ENCODE measurements at regions of chr16 and their contacts with region 1.

Region 1: GRCh38 chr16:72664509-72665225 is 383.3 kb downstream of the ZFHX3 start:
- DNase-seq: peak; percentile 91 to 94
- H3K4me3 ChIP-seq: peak overlapping the region; percentile 90 to 93 (median 93)
- H3K27ac ChIP-seq: peak overlapping the region; percentile 40 to 68
- H3K4me1 ChIP-seq: no peaks in the 10 kb centered on the region
- H3K27me3 ChIP-seq: no peaks in the 10 kb centered on the region
- CTCF ChIP-seq: no peak
- POLR2A ChIP-seq: no peak

Region 2: DNA sequence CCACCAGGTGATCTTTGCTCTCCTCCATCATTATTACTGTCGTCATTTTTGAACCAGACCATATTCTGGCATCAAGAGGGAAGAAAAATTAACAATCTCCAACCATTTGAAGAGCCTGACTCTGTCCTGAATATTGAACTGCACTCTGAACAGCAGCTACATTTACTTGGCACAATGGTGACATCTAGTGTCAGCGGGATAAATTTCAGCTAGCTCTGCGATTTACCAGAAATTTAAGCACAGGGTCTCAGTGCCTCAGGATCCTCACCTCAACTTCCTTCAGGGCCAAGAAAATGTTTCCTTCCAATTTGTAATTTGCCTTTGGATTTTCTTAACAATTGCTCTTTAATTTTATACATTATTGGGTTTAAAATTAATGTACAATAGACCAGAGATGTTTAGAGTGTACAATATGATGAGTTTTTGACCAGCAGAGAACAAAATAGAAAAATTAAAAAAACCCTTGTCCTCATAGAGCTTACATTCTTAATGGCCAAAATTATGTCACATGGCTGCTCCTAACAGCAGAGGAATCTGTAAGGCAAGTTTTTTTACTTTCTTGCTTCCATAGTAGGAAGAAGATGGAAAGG is 1164.8 kb before region 1 on chr16:
- intact Hi-C with region 1: loop called (anchors 10 kb)
- DNase-seq: no peak
- H3K4me3 ChIP-seq: no peak overlapping the region
- H3K27ac ChIP-seq: no peak overlapping the region
- H3K4me1 ChIP-seq: no peaks in the 10 kb centered on the region
- H3K27me3 ChIP-seq: no peaks in the 10 kb centered on the region
- CTCF ChIP-seq: peak; percentile 49 to 65 (median 55)
- POLR2A ChIP-seq: no peak

Region 3: GRCh38 chr16:72552654-72553053 is 112.0 kb before region 1 on chr16:
- intact Hi-C with region 1: no loop called
- DNase-seq: no peak
- H3K4me3 ChIP-seq: no peak overlapping the region
- H3K27ac ChIP-seq: no peak overlapping the region
- H3K4me1 ChIP-seq: no peaks in the 10 kb centered on the region
- H3K27me3 ChIP-seq: no peaks in the 10 kb centered on the region
- CTCF ChIP-seq: no peak
- POLR2A ChIP-seq: no peak

Region 4: GRCh38 chr16:73036074-73036826 is 371.6 kb after region 1 on chr16:
- intact Hi-C with region 1: no loop called
- DNase-seq: no peak
- H3K4me3 ChIP-seq: peak overlapping the region in 2 of 3 donors; percentile 29 to 36
- H3K27ac ChIP-seq: no peak overlapping the region
- H3K4me1 ChIP-seq: peaks cover 0 to 7% of the 10 kb centered on the region in 2 donors
- H3K27me3 ChIP-seq: no peaks in the 10 kb centered on the region
- CTCF ChIP-seq: no peak
- POLR2A ChIP-seq: no peak

Measured in breast epithelium (tissue), 4 donors.